ENCODE measurements at regions of chr1 and their contacts with region 1.

Region 1: GRCh38 chr1:112803906-112804762 is 89.0 kb upstream of the PPM1J start:
- DNase-seq: peak; percentile 4
- ATAC-seq: peak; percentile 99
- H3K4me3 ChIP-seq: no peak overlapping the region
- H3K27ac ChIP-seq: no peak overlapping the region
- H3K4me1 ChIP-seq: peaks cover 4% of the 10 kb centered on the region; the same call in 1 of the 2 replicates
- H3K27me3 ChIP-seq: peaks cover 0 to 4% of the 10 kb centered on the region in 2 experiments; a peak in 1 of 4 replicates
- CTCF ChIP-seq: peak; percentile 88 to 95 (median 89)
- EP300 ChIP-seq: no peak
- POLR2A ChIP-seq: no peak
- RAD21 ChIP-seq: peak; percentile 92

Region 2: GRCh38 chr1:112581530-112582192 is 222.5 kb before region 1 on chr1:
- CTCF ChIA-PET with region 1: no interaction called
- POLR2A ChIA-PET with region 1: no interaction called
- RAD21 ChIA-PET with region 1: no interaction called
- SMC1A ChIA-PET with region 1: no interaction called
- in situ Hi-C with region 1: no loop called
- intact Hi-C with region 1: no loop called
- DNase-seq: no peak
- ATAC-seq: no peak
- H3K4me3 ChIP-seq: no peak overlapping the region
- H3K27ac ChIP-seq: no peak overlapping the region
- H3K4me1 ChIP-seq: no peaks in the 10 kb centered on the region
- H3K27me3 ChIP-seq: no peaks in the 10 kb centered on the region
- CTCF ChIP-seq: no peak
- EP300 ChIP-seq: no peak
- POLR2A ChIP-seq: no peak
- RAD21 ChIP-seq: no peak

Region 3: DNA sequence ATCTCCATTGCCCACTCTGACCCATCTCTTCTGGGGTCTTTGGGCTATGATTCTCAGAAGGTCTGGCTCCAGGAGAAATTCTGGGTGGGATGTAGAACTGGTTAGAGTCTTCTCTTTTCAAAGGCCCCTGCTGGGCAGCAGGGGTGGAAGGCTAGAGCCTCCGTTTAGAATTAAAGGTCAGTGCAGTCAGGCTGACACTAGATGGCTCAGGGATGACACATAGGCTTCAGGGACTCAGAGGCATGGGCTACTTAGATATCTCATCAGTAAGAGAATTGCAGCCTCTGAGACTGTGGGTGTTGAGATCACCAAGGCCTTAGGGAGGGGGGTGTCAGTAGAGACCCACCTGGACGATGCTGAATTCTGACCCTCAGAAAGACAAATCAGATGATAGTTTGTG is 76.4 kb before region 1 on chr1:
- CTCF ChIA-PET with region 1: interaction called, 428 read pairs
- POLR2A ChIA-PET with region 1: no interaction called
- RAD21 ChIA-PET with region 1: interaction called, 3 read pairs
- SMC1A ChIA-PET with region 1: interaction called, 4 read pairs
- in situ Hi-C with region 1: no loop called
- intact Hi-C with region 1: no loop called
- DNase-seq: no peak
- ATAC-seq: peak; percentile 51; the same call in 2 of the 3 replicates
- H3K4me3 ChIP-seq: no peak overlapping the region
- H3K27ac ChIP-seq: no peak overlapping the region
- H3K4me1 ChIP-seq: no peaks in the 10 kb centered on the region
- H3K27me3 ChIP-seq: no peaks in the 10 kb centered on the region; a peak in 1 of 4 replicates
- CTCF ChIP-seq: no peak
- EP300 ChIP-seq: no peak
- POLR2A ChIP-seq: no peak
- RAD21 ChIP-seq: 0 out of 2 replicates have a peak, but pooled peaks have one; percentile 10

Region 4: DNA sequence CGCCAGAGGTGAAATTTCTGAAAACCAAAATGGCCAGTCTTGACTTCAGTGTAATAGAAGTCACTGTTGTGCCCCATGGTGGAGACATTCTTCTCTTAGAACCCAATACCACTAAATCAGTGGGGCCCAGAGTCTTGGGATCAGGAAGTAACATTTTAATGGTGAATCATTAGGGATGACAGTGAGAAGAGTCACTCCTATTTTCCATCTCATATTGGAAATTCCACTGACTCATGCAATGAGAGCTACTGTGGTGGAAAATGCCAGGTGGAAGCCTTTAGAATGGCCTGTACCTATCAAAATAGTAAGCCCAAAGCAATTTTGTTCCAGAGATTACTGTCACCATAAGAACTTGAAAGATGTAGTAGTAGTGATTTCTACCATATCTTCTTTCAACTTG is 68.4 kb before region 1 on chr1:
- CTCF ChIA-PET with region 1: interaction called, 11 read pairs
- POLR2A ChIA-PET with region 1: no interaction called
- RAD21 ChIA-PET with region 1: no interaction called
- SMC1A ChIA-PET with region 1: interaction called, 4 read pairs
- in situ Hi-C with region 1: no loop called
- intact Hi-C with region 1: no loop called
- DNase-seq: no peak
- ATAC-seq: no peak
- H3K4me3 ChIP-seq: no peak overlapping the region
- H3K27ac ChIP-seq: no peak overlapping the region
- H3K4me1 ChIP-seq: no peaks in the 10 kb centered on the region
- H3K27me3 ChIP-seq: no peaks in the 10 kb centered on the region; a peak in 1 of 4 replicates
- CTCF ChIP-seq: no peak
- EP300 ChIP-seq: no peak
- POLR2A ChIP-seq: no peak
- RAD21 ChIP-seq: no peak

Measured in GM12878 (cell line).